AG04449 (cell line): ENCODE measurements at regions of chr2 and their contacts with region 1.

Region 1: DNA sequence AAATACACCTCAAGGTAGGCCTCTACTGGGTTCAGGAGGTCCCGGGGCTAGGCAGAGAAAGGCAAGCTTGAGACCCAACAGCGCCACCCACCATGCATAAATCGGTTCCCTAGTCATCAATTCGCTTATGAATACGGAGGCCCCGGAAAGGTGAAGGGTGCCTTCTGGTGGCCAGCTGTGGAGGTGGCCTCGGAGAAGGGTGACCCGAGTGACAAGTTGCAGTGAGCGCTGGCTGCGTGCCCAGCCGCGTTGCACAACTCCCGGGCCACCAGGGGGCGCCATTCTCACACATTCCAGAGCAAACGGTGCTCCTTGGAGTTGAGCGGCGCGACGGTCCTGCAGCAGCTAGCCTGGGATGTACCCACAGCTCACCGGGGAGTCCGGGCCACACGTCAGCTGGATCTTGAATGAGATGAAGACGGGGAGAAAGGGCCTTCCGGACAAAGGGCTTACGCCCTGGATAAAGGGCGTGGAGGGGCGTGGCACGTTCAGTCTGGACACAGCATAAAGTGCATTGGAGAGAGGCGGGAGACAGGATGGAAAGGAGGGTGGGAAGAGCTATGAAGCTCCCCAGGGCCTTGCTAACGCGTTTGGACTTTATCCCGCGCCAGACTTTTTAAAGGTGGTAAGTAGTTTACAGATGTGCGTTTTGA is 20.4 kb downstream of the TMSB10 start:
- DNase-seq: no peak
- H3K4me3 ChIP-seq: peak overlapping the region; percentile 58
- CTCF ChIP-seq: peak; percentile 93

Region 2: DNA sequence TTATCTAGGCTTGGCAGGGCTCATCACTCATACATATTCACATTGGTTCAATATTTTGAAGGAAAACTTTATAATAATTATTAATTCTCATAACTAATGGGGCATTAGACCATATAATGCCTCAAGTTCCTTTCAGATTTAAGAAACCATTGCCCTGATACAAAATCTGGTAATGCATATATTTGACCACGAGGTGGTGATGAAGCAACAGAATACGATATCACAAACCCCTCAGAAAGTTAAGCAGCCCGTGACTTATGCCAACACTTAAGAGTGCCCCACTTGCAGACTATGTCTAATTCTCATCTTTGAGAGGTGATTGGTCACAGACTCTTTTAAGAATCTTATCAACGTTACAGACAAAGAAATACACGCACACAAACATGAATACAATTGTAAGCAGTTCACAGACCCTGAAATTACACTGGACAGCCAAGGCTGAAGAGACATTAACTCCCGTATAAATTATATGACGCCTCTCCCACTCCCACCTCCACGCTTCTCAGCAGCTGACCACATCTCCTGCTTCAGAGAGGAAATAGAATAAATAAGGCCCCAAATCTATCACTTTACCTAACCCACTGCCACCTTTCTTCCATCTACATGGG is 430.2 kb before region 1 on chr2:
- CTCF ChIA-PET with region 1: interaction called, 53 read pairs
- POLR2A ChIA-PET with region 1: no interaction called
- DNase-seq: no peak
- H3K4me3 ChIP-seq: no peak overlapping the region
- CTCF ChIP-seq: peak; percentile 43

Region 3: DNA sequence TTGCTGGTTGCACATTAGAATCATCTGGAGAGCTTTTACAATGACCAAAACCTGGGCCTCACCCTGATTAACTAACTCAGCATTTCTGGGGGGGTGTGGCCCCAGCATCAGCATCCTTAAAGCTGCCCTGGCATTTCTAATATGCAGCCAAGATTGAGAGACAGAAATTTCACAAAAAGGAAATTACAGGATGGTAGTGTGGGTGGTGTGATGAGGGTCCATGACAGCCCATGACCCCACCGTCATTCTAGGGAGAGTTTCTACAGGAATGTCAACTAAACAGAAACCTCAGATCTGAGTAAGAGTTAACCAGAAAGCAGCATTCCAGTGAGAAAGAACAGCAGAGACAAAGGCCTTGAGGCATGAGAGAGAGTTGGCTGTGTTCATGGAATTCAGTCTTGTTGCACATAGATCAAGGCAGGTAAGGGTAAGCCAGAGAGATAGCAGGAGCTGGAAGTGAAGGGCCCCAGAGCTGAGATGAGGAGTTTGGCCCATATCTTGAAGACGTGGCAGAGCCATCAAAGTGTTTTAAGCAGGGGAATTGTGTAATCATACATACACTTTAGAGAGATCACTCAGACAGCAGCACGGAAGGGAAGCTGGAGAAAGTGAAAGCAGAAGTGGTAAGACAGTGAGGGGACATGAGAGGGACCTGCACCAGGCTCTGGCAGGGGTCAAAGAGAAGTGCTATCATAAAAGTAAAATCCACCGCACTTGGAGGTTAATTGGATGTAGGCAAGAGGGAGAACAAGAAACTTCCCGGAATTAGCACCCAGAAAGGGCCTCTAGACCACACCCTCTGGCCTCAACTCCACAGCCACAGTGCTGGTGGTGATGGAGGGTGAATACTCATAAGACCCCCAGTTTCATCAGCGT is 37.2 kb before region 1 on chr2:
- CTCF ChIA-PET with region 1: interaction called, 41 read pairs
- POLR2A ChIA-PET with region 1: interaction called, 3 read pairs
- DNase-seq: no peak
- H3K4me3 ChIP-seq: peak overlapping the region; percentile 33
- CTCF ChIP-seq: no peak

Region 4: GRCh38 chr2:84912984-84913383 is 12.9 kb before region 1 on chr2:
- CTCF ChIA-PET with region 1: interaction called, 50 read pairs
- POLR2A ChIA-PET with region 1: interaction called, 71 read pairs
- DNase-seq: no peak
- H3K4me3 ChIP-seq: no peak overlapping the region
- CTCF ChIP-seq: no peak

Region 5: GRCh38 chr2:84958135-84959044 is 32.5 kb after region 1 on chr2:
- CTCF ChIA-PET with region 1: interaction called, 23 read pairs
- POLR2A ChIA-PET with region 1: interaction called, 5 read pairs
- DNase-seq: peak; percentile 81
- H3K4me3 ChIP-seq: no peak overlapping the region
- CTCF ChIP-seq: no peak

Region 6: GRCh38 chr2:85037135-85037534 is 111.3 kb after region 1 on chr2:
- CTCF ChIA-PET with region 1: interaction called, 10 read pairs
- POLR2A ChIA-PET with region 1: no interaction called
- DNase-seq: no peak
- H3K4me3 ChIP-seq: no peak overlapping the region
- CTCF ChIP-seq: no peak

Region 7: GRCh38 chr2:85085563-85085962 is 159.7 kb after region 1 on chr2:
- CTCF ChIA-PET with region 1: no interaction called
- POLR2A ChIA-PET with region 1: no interaction called
- DNase-seq: no peak
- H3K4me3 ChIP-seq: no peak overlapping the region
- CTCF ChIP-seq: no peak